ENCODE measurements at regions of chr15 and their contacts with region 1.

Region 1: GRCh38 chr15:39125904-39126303 is 455.0 kb upstream of the THBS1 start:
- DNase-seq: peak; percentile 78
- H3K4me3 Mint-ChIP-seq: no peak overlapping the region
- H3K27ac Mint-ChIP-seq: no peak overlapping the region
- H3K4me1 Mint-ChIP-seq: peaks cover 19% of the 10 kb centered on the region
- H3K27me3 Mint-ChIP-seq: peaks cover 11% of the 10 kb centered on the region

Region 2: GRCh38 chr15:38576837-38577236 is 549.1 kb before region 1 on chr15:
- intact Hi-C with region 1: no loop called
- DNase-seq: no peak
- H3K4me3 Mint-ChIP-seq: no peak overlapping the region
- H3K27ac Mint-ChIP-seq: no peak overlapping the region
- H3K4me1 Mint-ChIP-seq: peaks cover 9% of the 10 kb centered on the region
- H3K27me3 Mint-ChIP-seq: peaks cover 2% of the 10 kb centered on the region

Region 3: DNA sequence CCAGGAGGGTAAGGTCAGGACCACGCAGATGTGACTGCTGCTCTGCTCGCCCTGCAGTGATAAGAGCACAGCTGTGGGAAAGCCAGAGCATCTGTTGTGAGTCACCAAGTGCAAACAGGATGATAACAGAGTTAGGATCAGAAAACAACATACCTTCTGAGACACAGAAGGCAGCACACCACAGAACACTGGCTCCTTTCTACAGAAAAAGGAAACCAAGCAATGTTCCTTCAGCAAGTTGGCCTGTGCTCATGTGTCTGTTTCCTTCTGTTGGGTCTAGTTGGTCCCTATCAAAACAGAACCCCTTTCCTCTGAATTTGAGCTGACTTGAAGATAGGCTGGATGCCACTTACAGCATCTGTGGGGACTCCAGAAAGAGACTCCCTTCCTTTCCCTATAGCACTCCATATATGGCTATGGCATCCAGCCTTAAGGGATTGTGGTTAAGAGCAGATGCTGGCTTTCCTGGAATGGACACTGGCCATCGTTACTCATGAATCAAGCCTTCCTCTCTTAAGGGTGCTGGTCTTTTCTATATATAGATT is 14.2 kb after region 1 on chr15:
- intact Hi-C with region 1: loop called (anchors 2 kb)
- DNase-seq: peak; percentile 75
- H3K4me3 Mint-ChIP-seq: no peak overlapping the region
- H3K27ac Mint-ChIP-seq: peak overlapping the region; percentile 84
- H3K4me1 Mint-ChIP-seq: peaks cover 44% of the 10 kb centered on the region
- H3K27me3 Mint-ChIP-seq: no peaks in the 10 kb centered on the region

Region 4: DNA sequence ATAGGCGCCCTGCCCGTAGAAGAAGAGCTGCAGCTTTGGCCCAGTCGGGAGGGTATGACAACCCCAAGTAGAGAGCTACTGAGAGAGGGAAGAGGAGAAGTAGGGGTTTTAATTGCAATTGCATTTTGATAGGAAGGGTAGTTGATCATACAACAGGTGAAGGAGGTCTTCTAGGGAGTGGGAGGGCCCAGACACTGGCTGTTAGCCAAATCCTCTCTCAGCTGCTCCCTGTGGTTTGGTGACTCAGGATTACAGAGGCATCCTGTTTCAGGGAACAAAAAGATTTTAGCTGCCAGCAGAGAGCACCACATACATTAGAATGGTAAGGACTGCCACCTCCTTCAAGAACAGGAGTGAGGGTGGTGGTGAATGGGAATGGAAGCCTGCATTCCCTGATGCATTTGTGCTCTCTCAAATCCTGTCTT is 46.1 kb after region 1 on chr15:
- intact Hi-C with region 1: loop called (anchors 10 kb)
- DNase-seq: peak; percentile 65
- H3K4me3 Mint-ChIP-seq: no peak overlapping the region
- H3K27ac Mint-ChIP-seq: no peak overlapping the region
- H3K4me1 Mint-ChIP-seq: peaks cover 9% of the 10 kb centered on the region
- H3K27me3 Mint-ChIP-seq: peaks cover 36% of the 10 kb centered on the region

Region 5: GRCh38 chr15:39251413-39252133 is 125.7 kb after region 1 on chr15:
- intact Hi-C with region 1: loop called (anchors 5 kb)
- DNase-seq: peak; percentile 67
- H3K4me3 Mint-ChIP-seq: peak overlapping the region; percentile 38
- H3K27ac Mint-ChIP-seq: peak overlapping the region; percentile 80
- H3K4me1 Mint-ChIP-seq: peaks cover 23% of the 10 kb centered on the region
- H3K27me3 Mint-ChIP-seq: peaks cover 2% of the 10 kb centered on the region

Region 6: GRCh38 chr15:39756806-39757522 is 631.1 kb after region 1 on chr15:
- intact Hi-C with region 1: loop called (anchors 5 kb)
- DNase-seq: peak; percentile 75
- H3K4me3 Mint-ChIP-seq: no peak overlapping the region
- H3K27ac Mint-ChIP-seq: no peak overlapping the region
- H3K4me1 Mint-ChIP-seq: no peaks in the 10 kb centered on the region
- H3K27me3 Mint-ChIP-seq: peaks cover 49% of the 10 kb centered on the region

Measured in activated CD4-positive, alpha-beta T cell treated with anti-CD3 and anti-CD28 coated beads, Interleukin-2, amount 10 ng/mL, durations not matched to agents 24 days and 14 days (primary cell).